ENCODE measurements at regions of chr11 and their contacts with region 1.

Region 1: GRCh38 chr11:124070915-124071635 is 29.9 kb upstream of the OR10G7 start:
- DNase-seq: peak; percentile 41
- H3K4me3 Mint-ChIP-seq: peak overlapping the region; percentile 6
- H3K27ac Mint-ChIP-seq: peak overlapping the region; percentile 63
- H3K4me1 Mint-ChIP-seq: peaks cover 24% of the 10 kb centered on the region
- H3K27me3 Mint-ChIP-seq: peaks cover 14% of the 10 kb centered on the region

Region 2: DNA sequence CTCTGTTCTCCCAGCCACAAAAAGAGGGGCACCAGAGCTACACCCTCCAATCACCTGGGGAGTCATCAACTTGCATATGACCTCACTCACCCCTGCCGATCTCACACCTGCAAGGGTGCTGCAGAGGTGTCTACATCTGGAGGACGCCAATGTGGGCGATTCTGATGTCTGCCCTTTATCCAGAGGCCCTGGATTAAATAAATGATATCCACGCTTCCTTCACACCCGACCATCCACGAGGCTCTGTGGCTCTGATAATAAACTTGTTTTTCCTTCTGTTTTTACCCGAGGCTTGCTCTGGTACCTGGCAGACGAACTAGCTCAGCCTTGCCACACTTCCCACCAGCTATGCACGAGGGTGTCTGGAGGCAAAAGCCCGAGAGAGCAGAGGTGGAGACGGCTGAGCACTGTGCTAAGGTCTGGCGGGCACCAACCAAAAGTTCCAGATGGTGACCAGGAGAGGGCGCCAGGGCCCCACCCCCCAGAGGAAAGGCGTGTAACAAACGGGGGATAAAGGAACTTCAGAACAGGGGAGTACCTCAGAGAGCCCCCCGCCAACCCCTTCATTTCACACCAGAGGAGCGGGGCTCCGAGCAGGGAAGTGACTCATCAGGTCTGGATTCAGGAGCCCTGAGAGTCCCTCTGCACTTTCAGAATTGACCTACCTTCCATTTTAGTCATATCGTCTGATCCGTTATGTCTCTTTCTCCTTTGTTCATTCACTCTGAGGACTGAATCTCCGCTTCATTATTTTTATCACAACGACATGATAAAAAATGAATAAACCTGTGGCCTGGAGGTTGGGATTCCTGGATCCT is 430.2 kb before region 1 on chr11:
- intact Hi-C with region 1: loop called (anchors 5 kb)
- DNase-seq: peak; percentile 29
- H3K4me3 Mint-ChIP-seq: no peak overlapping the region
- H3K27ac Mint-ChIP-seq: no peak overlapping the region
- H3K4me1 Mint-ChIP-seq: no peaks in the 10 kb centered on the region
- H3K27me3 Mint-ChIP-seq: peaks cover 3% of the 10 kb centered on the region

Region 3: DNA sequence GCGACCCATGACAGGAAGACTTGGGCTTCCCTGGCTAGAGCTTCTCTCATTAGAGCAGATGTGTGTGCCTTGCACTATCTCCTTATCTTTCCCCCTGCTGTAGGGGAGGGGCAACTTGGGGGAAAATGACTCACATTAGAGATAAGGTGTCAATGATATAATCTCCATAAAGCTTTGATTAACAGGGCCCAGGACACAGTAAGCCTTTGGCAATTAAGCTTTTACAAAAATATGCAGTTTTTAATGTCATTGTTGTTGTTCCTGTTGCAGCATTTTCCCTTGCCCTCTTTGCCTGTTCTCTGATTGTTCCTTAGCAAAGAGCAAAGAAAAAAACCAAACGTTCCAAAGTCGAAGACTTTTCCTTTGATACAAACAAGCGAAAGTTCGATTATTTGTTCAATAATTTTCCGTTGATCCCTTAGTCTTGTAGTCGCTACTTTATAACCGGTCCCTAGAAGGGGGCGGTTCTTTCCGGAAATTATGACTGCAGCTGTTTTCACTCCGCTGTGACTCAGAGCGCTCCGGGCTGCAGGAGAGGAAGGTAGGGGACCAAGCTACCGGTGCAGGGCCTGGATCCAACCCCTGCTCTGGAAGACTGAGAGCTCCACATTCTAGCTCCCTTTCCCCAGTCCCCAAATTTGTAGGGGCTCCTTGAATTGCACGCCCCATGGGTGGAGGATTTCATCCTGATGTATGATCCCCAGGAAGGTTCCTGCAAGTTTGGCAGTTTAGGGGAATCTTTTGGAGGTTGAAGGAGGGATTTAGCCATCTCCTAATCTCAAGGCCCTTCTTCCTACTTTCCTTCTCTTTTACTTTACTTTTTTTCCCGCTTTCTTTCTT is 44.1 kb after region 1 on chr11 and contains the start of gene VWA5A:
- intact Hi-C with region 1: loop called (anchors 1 kb)
- DNase-seq: peak; percentile 71
- H3K4me3 Mint-ChIP-seq: peak within 1 kb of the TSS; percentile 94
- H3K27ac Mint-ChIP-seq: peak within 1 kb of the TSS; percentile 92
- H3K4me1 Mint-ChIP-seq: peaks cover 34% of the 10 kb centered on the region
- H3K27me3 Mint-ChIP-seq: peaks cover 7% of the 10 kb centered on the region
- total RNA-seq, gene VWA5A: 7.9 and 8.0 TPM in 2 replicates

Region 4: DNA sequence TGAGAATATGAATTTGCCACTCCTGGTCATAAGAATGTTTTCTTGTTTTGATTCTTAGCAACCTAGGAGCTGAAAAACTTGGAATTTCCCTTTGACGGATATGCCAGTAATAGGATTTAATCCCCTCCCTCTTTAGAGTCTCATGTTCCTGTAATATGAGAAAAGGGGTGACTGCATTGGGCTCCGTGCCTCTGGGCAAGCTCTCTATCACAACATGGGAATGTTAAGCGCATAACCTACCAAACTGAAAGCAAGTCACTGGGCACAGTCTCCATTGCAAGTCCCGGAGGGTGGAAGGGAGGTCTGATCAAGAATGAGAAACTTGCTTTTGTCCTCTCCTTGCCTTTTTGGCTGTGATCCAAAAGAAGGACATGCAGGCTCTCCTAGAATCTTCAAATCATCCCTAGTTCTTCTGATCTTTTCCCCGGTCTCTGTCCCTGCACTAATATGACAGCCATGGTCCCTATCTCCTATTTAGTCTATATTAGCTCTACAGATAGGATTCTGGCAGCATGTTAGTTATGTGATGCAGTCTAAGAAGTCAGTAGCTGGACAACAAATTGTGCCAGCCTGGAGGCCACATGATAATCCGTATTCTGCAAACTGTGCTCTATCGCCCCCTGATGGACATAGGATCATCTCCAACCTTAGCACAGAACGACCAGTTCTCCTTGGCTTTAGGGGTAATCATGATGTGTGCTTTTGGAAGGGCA is 123.8 kb after region 1 on chr11:
- intact Hi-C with region 1: loop called (anchors 1 kb)
- DNase-seq: peak; percentile 22
- H3K4me3 Mint-ChIP-seq: no peak overlapping the region
- H3K27ac Mint-ChIP-seq: no peak overlapping the region
- H3K4me1 Mint-ChIP-seq: no peaks in the 10 kb centered on the region
- H3K27me3 Mint-ChIP-seq: peaks cover 11% of the 10 kb centered on the region

Region 5: GRCh38 chr11:124402326-124402922 is 331.3 kb after region 1 on chr11:
- intact Hi-C with region 1: loop called (anchors 2 kb)
- DNase-seq: peak; percentile 31
- H3K4me3 Mint-ChIP-seq: no peak overlapping the region
- H3K27ac Mint-ChIP-seq: no peak overlapping the region
- H3K4me1 Mint-ChIP-seq: no peaks in the 10 kb centered on the region
- H3K27me3 Mint-ChIP-seq: peaks cover 4% of the 10 kb centered on the region

Region 6: GRCh38 chr11:124586238-124586860 is 515.3 kb after region 1 on chr11:
- intact Hi-C with region 1: loop called (anchors 2 kb)
- DNase-seq: no peak
- H3K4me3 Mint-ChIP-seq: no peak overlapping the region
- H3K27ac Mint-ChIP-seq: no peak overlapping the region
- H3K4me1 Mint-ChIP-seq: no peaks in the 10 kb centered on the region
- H3K27me3 Mint-ChIP-seq: peaks cover 8% of the 10 kb centered on the region

Measured in activated T-helper 1 cell treated with anti-CD3 and anti-CD28 coated beads, Interleukin-12 subunit alpha, Interleukin-12 subunit beta, Interleukin-2, Interleukin-4 antibody, amounts not matched to agents 30 ng/mL and 10 ng/mL and 1 ng/mL, durations not matched to agents 14 hours and 24 hours and 36 hours (primary cell).